ENCODE measurements at regions of chr2 and their contacts with region 1.

Region 1: GRCh38 chr2:62065243-62065642 is 130.7 kb upstream of the B3GNT2 start:
- DNase-seq: no peak
- H3K27ac ChIP-seq: no peak overlapping the region
- CTCF ChIP-seq: no peak

Region 2: DNA sequence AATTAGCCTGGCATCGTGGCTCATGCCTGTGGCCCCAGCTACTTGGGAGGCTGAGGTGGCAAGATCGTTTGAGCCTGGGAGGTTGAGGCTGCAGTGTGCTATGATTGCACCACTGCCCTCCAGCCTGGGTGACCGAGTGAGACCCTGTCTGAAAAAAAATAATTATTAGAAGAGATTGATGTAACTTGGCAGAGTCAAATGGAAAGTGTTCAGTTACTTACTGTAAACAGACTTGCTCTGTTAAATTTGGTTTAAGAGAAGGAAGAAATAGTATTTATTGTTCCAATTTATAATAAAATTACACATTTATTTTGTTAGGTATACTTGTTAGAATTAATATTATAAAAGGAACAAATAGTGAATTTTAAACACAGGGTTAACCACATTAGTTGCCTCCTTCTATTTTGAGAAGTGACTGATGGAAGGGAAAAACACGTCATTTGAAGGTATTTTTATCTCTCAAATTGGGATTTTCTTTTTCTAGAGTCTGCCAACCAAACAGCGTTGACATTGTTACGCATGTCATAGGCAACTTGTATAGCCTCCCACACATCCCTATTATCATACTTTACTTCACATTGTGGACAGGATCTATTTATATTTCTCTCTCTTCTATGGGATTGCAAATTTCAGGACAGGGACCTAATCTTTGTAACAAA is 11.9 kb after region 1 on chr2:
- CTCF ChIA-PET with region 1: no interaction called
- POLR2A ChIA-PET with region 1: no interaction called
- DNase-seq: no peak
- H3K27ac ChIP-seq: no peak overlapping the region
- CTCF ChIP-seq: no peak

Region 3: DNA sequence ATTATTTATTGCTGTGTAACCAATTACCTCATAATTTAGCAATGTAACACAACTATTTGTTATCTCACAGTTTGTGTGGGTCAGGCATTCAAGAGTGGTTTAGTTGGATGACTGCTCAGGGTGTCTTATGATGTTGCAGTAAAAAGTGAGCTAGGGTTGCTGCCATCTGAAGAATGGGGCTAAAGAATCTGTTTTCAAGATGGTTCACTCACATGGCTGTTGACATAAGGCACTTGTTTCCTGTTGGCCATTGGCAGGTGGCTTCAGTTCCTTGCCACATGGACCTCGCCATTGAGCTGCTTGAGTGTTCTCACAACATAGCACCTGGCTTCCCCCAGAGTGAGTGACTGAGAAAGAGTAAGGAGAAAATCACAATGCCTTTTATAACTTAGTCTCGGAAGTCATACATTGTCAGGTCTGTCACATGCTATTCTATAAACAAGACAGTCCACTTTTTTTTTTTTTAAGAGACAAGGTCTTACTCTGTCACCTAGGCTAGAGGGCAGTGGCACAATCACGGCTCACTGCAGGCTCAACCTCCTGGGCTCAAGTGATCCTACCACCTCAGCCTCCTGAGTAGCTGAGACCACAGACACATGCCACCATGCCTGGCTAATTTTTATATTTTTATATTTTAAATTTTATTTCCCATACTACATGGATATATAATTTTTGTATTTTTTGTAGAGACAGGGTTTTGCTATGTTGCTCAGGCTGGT is 317.7 kb after region 1 on chr2:
- CTCF ChIA-PET with region 1: interaction called, 16 read pairs
- POLR2A ChIA-PET with region 1: no interaction called
- DNase-seq: no peak
- H3K27ac ChIP-seq: no peak overlapping the region
- CTCF ChIP-seq: no peak